Activated CD4-positive, alpha-beta T cell treated with anti-CD3 and anti-CD28 coated beads for 36 hours (primary cell): ENCODE measurements at regions of chr3 and their contacts with region 1.

Region 1: GRCh38 chr3:194333212-194333980 is 17.7 kb downstream of the CPN2 start:
- DNase-seq: peak; percentile 94
- ATAC-seq: peak; percentile 98
- H3K4me3 Mint-ChIP-seq: peak overlapping the region; percentile 54
- H3K27ac Mint-ChIP-seq: no peak overlapping the region
- H3K4me1 Mint-ChIP-seq: no peaks in the 10 kb centered on the region
- H3K27me3 Mint-ChIP-seq: peaks cover 25% of the 10 kb centered on the region

Region 2: GRCh38 chr3:194112120-194113106 is 221.0 kb before region 1 on chr3:
- CTCF ChIA-PET with region 1: no interaction called
- POLR2A ChIA-PET with region 1: no interaction called
- intact Hi-C with region 1: no loop called
- DNase-seq: no peak
- ATAC-seq: no peak
- H3K4me3 Mint-ChIP-seq: no peak overlapping the region
- H3K27ac Mint-ChIP-seq: no peak overlapping the region
- H3K4me1 Mint-ChIP-seq: no peaks in the 10 kb centered on the region
- H3K27me3 Mint-ChIP-seq: peaks cover 5% of the 10 kb centered on the region

Region 3: DNA sequence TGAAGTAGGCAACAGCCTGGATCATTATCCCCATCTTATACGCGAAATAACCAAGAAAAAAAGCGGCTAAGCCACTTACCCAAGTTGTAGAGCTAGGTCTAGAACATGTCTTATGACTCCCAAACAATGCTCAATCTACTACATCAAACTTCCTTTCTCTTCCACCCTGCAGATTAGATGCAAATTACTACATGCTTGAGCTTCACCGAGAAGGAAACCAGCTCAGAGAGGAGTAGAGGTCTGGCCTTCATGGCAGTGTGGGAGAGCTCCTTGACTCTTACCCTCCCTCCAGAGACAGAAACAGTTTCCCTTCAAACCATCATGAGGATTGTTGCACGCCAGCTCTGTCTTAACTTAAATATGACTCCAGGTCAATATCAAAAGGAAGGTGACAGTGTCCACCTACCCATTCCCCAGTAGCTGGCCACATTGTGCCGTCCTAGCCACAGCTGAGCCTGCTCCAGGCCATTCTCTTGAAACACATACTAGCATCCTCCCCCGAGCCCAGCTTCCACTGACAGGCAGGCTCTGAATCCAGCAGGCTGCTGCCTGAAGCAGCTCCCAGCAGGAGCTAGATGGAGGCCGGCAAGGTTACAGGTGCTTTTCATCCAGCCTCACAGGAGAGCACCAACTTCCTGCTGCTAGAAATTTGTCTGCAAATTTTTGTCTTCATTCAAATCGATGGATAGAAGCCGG is 39.0 kb before region 1 on chr3:
- CTCF ChIA-PET with region 1: no interaction called
- POLR2A ChIA-PET with region 1: no interaction called
- intact Hi-C with region 1: no loop called
- DNase-seq: no peak
- ATAC-seq: no peak
- H3K4me3 Mint-ChIP-seq: no peak overlapping the region
- H3K27ac Mint-ChIP-seq: no peak overlapping the region
- H3K4me1 Mint-ChIP-seq: no peaks in the 10 kb centered on the region
- H3K27me3 Mint-ChIP-seq: peaks cover 2% of the 10 kb centered on the region

Region 4: DNA sequence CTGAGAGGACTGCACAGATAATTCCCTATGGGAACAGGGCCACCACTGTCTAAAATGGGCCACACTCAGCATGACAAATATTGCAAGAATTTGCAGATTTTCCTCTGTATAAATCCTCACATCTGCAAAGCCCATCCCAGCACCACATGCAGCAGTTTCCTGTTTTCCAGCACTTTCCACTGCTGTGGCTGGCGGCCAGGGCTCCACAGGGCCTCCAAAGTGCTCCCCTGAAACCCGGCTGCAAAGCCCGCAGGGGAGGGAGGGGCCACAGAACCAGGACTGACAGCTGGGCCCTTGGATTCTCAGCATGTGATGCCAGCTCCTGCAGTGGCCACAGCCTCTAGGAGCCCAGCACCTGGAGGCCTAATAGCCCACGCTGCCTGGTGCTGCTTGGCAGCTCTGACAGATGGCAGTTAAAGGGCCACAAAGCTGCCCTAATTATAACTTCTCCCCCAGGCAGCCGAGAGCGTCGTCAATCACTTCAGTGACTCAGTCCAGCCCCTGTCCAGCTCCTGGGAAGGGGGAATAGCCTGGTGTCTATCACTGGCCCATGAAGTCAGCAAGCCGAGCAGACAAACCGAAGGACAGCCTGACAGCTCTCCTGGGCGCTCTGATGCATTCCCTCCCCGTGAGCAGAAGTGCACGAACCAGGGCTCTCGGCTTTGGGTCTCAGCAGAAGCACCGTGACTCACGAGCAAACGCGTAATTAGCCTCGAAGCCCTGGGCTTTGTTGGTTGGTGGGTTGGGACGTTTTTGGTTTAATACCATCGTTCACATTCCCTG is 31.4 kb after region 1 on chr3:
- CTCF ChIA-PET with region 1: interaction called, 10 read pairs
- POLR2A ChIA-PET with region 1: no interaction called
- intact Hi-C with region 1: no loop called
- DNase-seq: no peak
- ATAC-seq: no peak
- H3K4me3 Mint-ChIP-seq: no peak overlapping the region
- H3K27ac Mint-ChIP-seq: no peak overlapping the region
- H3K4me1 Mint-ChIP-seq: no peaks in the 10 kb centered on the region
- H3K27me3 Mint-ChIP-seq: peaks cover 17% of the 10 kb centered on the region

Region 5: DNA sequence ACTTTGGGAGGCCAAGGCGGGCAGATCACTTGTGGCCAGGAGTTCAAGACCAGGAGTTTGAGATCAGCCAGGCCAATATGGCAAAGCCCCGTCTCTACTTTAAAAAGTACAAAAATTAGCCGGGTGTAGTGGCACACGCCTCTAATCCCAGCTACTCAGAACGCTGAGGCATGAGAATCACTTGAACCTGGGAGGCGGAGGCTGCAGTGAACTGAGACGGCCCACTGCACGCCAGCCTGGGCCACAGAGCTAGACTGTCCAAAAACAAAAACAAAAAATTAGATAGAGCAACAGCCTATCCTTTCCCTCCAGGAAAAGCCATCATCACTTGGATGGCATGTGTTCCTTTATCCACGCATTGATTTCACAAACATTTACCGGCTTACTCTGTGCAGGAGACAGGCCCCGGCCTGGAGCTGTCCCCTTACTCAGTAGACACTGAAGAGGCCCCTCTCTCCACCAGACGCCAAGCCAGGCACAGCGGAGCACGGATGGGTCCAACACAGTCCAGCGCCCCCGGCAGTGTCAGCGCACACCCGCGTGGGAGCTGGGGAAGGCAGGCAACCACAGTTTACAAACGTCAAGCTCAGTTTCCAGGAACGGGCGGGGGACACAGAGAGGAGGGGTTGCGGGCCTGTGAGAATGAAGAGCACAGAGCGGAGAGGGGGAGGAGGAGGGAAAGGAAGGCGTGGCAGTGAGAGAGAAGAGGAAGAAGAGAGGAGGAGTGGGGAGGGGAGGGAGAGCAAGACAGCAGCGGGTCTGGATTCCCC is 62.6 kb after region 1 on chr3:
- CTCF ChIA-PET with region 1: interaction called, 31 read pairs
- POLR2A ChIA-PET with region 1: no interaction called
- intact Hi-C with region 1: no loop called
- DNase-seq: peak; percentile 79
- ATAC-seq: peak; percentile 73
- H3K4me3 Mint-ChIP-seq: peak overlapping the region; percentile 60
- H3K27ac Mint-ChIP-seq: peak overlapping the region; percentile 73
- H3K4me1 Mint-ChIP-seq: peaks cover 55% of the 10 kb centered on the region
- H3K27me3 Mint-ChIP-seq: peaks cover 12% of the 10 kb centered on the region

Region 6: DNA sequence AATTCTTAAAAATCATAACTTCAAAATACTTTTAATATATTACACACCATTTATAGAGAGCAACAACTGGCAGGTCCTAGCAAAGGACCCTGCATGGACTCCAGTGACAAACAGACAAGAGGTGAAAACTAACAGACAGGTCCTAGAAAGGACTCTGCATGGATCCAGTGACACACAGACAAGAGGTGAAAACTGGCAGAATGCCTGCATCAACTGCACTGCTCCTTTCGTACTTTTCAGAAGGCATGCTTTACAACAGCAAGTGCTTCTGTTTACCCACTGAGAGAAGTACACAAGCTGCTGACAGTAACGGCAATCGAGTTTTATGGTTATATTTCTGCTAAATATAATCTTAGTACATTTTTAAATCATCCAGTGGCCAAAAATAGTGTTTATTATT is 89.9 kb after region 1 on chr3:
- CTCF ChIA-PET with region 1: no interaction called
- POLR2A ChIA-PET with region 1: no interaction called
- intact Hi-C with region 1: no loop called
- DNase-seq: no peak
- ATAC-seq: no peak
- H3K4me3 Mint-ChIP-seq: no peak overlapping the region
- H3K27ac Mint-ChIP-seq: no peak overlapping the region
- H3K4me1 Mint-ChIP-seq: no peaks in the 10 kb centered on the region
- H3K27me3 Mint-ChIP-seq: no peaks in the 10 kb centered on the region

Region 7: GRCh38 chr3:194465920-194466570 is 132.6 kb after region 1 on chr3:
- CTCF ChIA-PET with region 1: interaction called, 4 read pairs
- POLR2A ChIA-PET with region 1: no interaction called
- intact Hi-C with region 1: loop called in 1 of 2 experiments (anchors 5 kb)
- DNase-seq: no peak
- ATAC-seq: peak; percentile 74
- H3K4me3 Mint-ChIP-seq: no peak overlapping the region
- H3K27ac Mint-ChIP-seq: peak overlapping the region; percentile 72
- H3K4me1 Mint-ChIP-seq: peaks cover 30% of the 10 kb centered on the region
- H3K27me3 Mint-ChIP-seq: no peaks in the 10 kb centered on the region

Region 8: DNA sequence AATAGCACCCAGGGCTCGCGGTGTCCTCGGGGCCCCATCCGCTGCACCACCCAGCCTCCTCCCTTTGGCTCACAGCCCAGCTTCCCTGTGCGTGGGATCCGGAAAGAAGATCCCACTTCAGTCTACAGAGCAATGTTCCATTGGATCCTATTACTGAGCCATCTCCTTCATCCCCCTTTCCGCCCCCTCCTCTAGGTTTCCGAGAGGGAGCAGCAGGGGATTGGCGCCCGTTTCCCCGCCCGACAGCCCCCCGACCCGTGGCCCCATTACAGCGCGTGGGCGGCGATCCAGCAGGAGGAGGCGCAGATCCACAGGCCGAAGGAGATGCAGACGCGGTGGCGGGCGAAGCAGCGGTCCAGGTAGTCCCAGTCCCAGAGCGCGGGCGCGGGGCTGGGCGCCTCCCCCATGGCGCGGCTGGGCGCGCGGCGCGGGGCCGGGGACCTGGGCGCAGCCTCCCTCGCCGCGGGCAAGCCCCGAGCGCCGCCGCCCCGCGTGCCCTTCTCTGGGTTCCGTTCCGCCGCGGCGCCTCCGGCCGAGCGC is 299.5 kb after region 1 on chr3:
- CTCF ChIA-PET with region 1: no interaction called
- POLR2A ChIA-PET with region 1: no interaction called
- intact Hi-C with region 1: loop called in 1 of 2 experiments (anchors 5 kb)
- DNase-seq: peak; percentile 19
- ATAC-seq: peak; percentile 76
- H3K4me3 Mint-ChIP-seq: peak overlapping the region; percentile 74
- H3K27ac Mint-ChIP-seq: no peak overlapping the region
- H3K4me1 Mint-ChIP-seq: peaks cover 5% of the 10 kb centered on the region
- H3K27me3 Mint-ChIP-seq: no peaks in the 10 kb centered on the region

Region 9: DNA sequence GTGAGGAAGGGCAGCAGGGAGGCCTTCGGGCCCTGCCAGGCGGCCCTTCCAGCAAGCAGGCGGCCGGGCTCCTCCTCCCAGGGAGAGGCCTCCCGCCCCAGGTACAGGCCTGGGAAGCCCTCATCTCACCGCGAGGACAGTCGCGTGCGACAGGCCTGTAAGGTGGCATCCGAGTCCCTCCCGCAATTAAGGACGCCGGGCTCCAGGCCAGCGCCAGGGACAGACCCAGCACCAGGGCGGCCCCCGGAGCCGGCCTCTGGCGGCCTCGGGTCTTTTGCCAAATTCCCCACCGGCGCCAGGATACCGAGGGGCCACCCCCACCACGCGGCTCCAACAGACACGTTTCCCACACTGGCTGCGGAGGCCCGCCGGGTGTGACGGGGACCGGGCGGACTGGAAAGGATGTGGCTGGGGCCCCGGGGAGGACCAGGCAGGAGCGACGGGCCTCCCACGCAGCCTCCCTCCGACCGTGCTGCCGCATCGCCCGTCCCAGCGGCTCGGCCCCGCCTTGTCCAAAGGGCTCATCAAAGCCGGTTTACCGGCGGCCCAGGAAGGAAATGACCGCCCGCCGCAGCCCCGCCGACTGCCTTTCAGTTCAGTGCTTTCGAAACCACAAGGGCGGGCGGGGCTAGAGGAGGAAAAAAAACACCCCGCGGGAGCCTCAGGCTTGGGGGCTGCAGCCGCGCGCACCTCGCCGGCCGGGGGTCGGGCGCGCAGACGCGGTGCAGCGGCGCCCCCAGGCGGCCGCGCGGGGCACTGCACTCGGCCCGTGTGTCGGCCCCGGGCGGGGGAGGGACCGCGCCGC is 926.3 kb after region 1 on chr3:
- CTCF ChIA-PET with region 1: no interaction called
- POLR2A ChIA-PET with region 1: no interaction called
- intact Hi-C with region 1: loop called in 1 of 2 experiments (anchors 5 kb)
- DNase-seq: peak; percentile 90
- ATAC-seq: peak; percentile 81
- H3K4me3 Mint-ChIP-seq: peak overlapping the region; percentile 30
- H3K27ac Mint-ChIP-seq: no peak overlapping the region
- H3K4me1 Mint-ChIP-seq: peaks cover 15% of the 10 kb centered on the region
- H3K27me3 Mint-ChIP-seq: no peaks in the 10 kb centered on the region